H1 (cell line): ENCODE measurements at regions of chr14 and their contacts with region 1.

Region 1: DNA sequence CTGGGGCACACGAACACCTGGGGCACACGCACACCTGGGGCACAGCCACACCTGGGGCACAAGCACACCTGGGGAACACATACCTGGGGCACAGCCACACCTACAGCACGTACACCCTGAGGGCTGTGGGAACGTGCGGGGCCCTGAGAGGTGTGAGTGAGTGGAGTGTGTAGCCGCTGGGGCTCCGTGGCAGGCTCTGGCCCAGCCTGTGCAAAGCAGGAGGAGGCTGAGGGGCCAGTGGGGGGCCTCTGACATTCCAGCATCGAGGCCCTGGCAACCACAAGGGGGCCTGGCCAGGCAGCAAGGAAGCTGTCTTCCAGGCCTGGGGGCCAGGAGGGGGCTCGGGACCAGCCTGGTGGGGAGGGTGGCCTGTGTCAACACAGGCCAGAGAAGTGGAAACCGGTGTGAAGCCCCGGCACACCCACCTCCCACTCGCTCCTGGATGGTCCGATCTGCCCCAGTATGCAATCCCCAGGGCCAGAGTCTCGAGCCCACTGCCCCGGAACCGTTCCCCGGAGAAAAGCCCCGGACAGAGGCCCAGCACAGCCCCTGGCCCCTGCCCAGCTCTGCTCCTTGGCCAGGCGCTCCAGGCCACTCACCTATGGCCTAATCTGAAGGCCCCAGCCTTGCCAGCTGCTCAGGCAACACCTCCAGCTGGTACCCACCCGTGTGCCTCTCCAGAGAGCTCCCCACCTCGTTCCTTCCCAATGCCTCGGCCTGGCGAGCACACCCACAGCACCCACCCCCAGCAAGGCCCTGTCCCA is 17.9 kb downstream of the AKT1 start:
- DNase-seq: peak in 1 of 2 experiments; percentile 62
- H3K4me3 ChIP-seq: no peak overlapping the region
- H3K27ac ChIP-seq: no peak overlapping the region
- H3K4me1 ChIP-seq: no peaks in the 10 kb centered on the region
- H3K27me3 ChIP-seq: no peaks in the 10 kb centered on the region
- CTCF ChIP-seq: peak in 2 of 3 experiments; percentile 39 to 40; a peak in 3 of 4 replicates
- EP300 ChIP-seq: no peak
- POLR2A ChIP-seq: no peak
- RAD21 ChIP-seq: peak; percentile 10 to 36; a peak in 2 of 4 replicates

Region 2: GRCh38 chr14:104477666-104478380 is 299.8 kb before region 1 on chr14:
- CTCF ChIA-PET with region 1: no interaction called
- POLR2A ChIA-PET with region 1: no interaction called
- DNase-seq: no peak
- H3K4me3 ChIP-seq: no peak overlapping the region
- H3K27ac ChIP-seq: no peak overlapping the region
- H3K4me1 ChIP-seq: no peaks in the 10 kb centered on the region; a peak in 2 of 7 replicates
- H3K27me3 ChIP-seq: no peaks in the 10 kb centered on the region; a peak in 1 of 7 replicates
- CTCF ChIP-seq: no peak
- EP300 ChIP-seq: no peak
- POLR2A ChIP-seq: no peak
- RAD21 ChIP-seq: no peak

Region 3: DNA sequence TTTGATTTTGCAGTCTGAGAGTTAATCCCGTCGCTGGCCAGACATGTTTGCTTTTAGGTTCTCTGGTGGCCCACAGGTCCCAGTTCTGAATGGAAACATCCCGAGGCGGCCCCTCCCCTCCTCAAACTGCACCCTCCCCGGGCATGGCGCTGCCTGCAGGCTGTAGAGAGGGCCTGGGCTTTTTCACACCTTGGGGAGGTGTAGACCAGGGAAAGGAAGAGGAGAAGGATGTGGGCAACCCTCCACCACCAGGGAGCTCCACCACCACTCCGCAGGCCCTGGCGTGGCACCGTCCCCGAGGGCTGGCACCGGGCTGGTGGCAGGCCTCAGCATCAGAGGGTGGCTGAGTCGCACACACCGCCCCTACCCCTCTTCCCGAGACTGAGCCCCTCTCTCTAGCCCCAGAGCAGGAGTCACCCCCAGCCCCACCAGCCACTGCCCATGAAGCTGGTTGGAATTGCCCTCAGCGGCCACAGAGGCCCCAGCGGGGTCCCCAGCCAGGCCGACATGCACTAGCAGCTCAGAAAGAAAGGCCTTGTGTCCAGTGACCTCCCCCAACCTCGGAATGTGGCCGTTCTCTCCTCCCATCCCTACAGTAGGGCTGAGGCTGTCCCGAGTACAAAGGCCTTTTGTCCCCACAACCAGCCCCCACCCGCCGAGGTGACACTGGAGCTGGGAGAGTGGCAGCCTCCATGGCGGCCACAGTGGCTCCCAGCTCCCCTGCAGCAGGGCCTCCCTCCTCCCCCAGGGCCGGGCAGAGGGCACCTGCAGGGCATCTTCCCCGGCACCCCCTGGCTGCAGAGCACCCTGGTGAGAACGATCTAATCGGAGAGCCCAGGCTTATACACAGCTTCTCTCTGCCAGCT is 111.8 kb before region 1 on chr14:
- CTCF ChIA-PET with region 1: no interaction called
- POLR2A ChIA-PET with region 1: no interaction called
- DNase-seq: no peak
- H3K4me3 ChIP-seq: no peak overlapping the region
- H3K27ac ChIP-seq: no peak overlapping the region
- H3K4me1 ChIP-seq: peaks cover 0 to 14% (median 9%) of the 10 kb centered on the region in 4 experiments; a peak in 6 of 7 replicates
- H3K27me3 ChIP-seq: no peaks in the 10 kb centered on the region
- CTCF ChIP-seq: peak; percentile 18 to 52 (median 45); a peak in 3 of 4 replicates
- EP300 ChIP-seq: no peak
- POLR2A ChIP-seq: no peak
- RAD21 ChIP-seq: peak; percentile 12 to 39; a peak in 2 of 4 replicates

Region 4: GRCh38 chr14:104794641-104795467 is 17.2 kb after region 1 on chr14:
- CTCF ChIA-PET with region 1: interaction called, 110 read pairs
- POLR2A ChIA-PET with region 1: interaction called, 4 read pairs
- DNase-seq: no peak
- H3K4me3 ChIP-seq: peak overlapping the region; percentile 56 to 74 (median 60)
- H3K27ac ChIP-seq: no peak overlapping the region
- H3K4me1 ChIP-seq: peaks cover 4 to 48% (median 33%) of the 10 kb centered on the region in 4 experiments
- H3K27me3 ChIP-seq: peaks cover 6 to 47% (median 40%) of the 10 kb centered on the region in 4 experiments
- CTCF ChIP-seq: no peak
- EP300 ChIP-seq: no peak
- POLR2A ChIP-seq: no peak
- RAD21 ChIP-seq: no peak